A673 (cell line): ENCODE measurements at regions of chrX and their contacts with region 1.

Region 1: GRCh38 chrX:38669428-38669827 is 108.1 kb downstream of the TSPAN7 start:
- DNase-seq: peak; percentile 4
- H3K4me3 ChIP-seq: no peak overlapping the region
- H3K27ac ChIP-seq: no peak overlapping the region
- H3K4me1 ChIP-seq: no peaks in the 10 kb centered on the region
- H3K27me3 ChIP-seq: no peaks in the 10 kb centered on the region
- CTCF ChIP-seq: no peak

Region 2: DNA sequence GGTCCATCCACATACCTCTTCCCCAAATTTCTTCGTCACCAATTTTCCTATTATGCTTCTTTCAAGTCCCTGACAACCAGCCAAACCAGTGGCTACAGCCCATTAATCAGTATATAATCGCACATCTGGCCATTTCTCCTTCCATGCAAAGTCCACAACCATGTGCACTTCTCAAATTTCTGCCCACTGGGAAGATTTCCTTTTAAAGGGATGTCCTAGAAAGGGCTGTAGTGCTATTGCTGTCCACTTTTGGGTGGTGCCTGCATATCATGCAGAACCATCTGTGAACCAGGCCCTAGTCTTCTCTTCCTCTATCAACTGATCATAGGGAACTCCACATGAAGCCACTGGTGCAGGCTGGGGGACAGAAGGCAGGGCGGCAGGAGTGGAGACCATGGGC is 76.7 kb after region 1 on chrX:
- CTCF ChIA-PET with region 1: no interaction called
- POLR2A ChIA-PET with region 1: no interaction called
- intact Hi-C with region 1: loop called (anchors 5 kb)
- DNase-seq: no peak
- H3K4me3 ChIP-seq: no peak overlapping the region
- H3K27ac ChIP-seq: no peak overlapping the region
- H3K4me1 ChIP-seq: no peaks in the 10 kb centered on the region
- H3K27me3 ChIP-seq: no peaks in the 10 kb centered on the region
- CTCF ChIP-seq: no peak